Calu3 (cell line): ENCODE measurements at regions of chr4 and their contacts with region 1.

Region 1: GRCh38 chr4:89657931-89658700 is 178.8 kb downstream of the SNCA start:
- DNase-seq: no peak
- H3K4me3 Mint-ChIP-seq: no peak overlapping the region
- H3K27ac Mint-ChIP-seq: no peak overlapping the region
- H3K4me1 Mint-ChIP-seq: peaks cover 8% of the 10 kb centered on the region
- H3K27me3 Mint-ChIP-seq: no peaks in the 10 kb centered on the region
- CTCF ChIP-seq: no peak

Region 2: DNA sequence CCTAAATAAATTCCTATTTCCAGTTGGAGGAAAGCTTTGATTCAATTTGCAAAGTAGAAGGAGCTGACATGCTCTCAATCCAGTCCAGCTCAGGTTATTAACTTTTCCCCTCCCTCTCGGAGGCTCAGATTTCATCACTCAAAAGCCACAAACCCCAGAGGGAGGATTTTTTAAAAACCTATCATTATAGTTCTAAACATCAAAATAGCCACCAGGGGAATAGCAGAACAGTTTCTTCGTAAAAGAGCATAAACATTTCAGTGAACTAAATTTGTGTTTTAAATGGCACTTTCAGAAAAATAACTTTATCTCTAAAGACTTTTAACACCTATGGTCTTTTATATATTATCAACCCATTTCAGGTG is 359.3 kb before region 1 on chr4:
- CTCF ChIA-PET with region 1: no interaction called
- intact Hi-C with region 1: no loop called
- DNase-seq: no peak
- H3K4me3 Mint-ChIP-seq: peak overlapping the region; percentile 82
- H3K27ac Mint-ChIP-seq: peak overlapping the region; percentile 92
- H3K4me1 Mint-ChIP-seq: peaks cover 28% of the 10 kb centered on the region
- H3K27me3 Mint-ChIP-seq: no peaks in the 10 kb centered on the region
- CTCF ChIP-seq: no peak

Region 3: GRCh38 chr4:89572224-89572858 is 85.8 kb before region 1 on chr4:
- CTCF ChIA-PET with region 1: no interaction called
- intact Hi-C with region 1: no loop called
- DNase-seq: no peak
- H3K4me3 Mint-ChIP-seq: no peak overlapping the region
- H3K27ac Mint-ChIP-seq: no peak overlapping the region
- H3K4me1 Mint-ChIP-seq: no peaks in the 10 kb centered on the region
- H3K27me3 Mint-ChIP-seq: no peaks in the 10 kb centered on the region
- CTCF ChIP-seq: no peak

Region 4: GRCh38 chr4:89868999-89869589 is 211.0 kb after region 1 on chr4:
- CTCF ChIA-PET with region 1: interaction called, 3 read pairs
- intact Hi-C with region 1: loop called (anchors 1 kb)
- DNase-seq: no peak
- H3K4me3 Mint-ChIP-seq: no peak overlapping the region
- H3K27ac Mint-ChIP-seq: no peak overlapping the region
- H3K4me1 Mint-ChIP-seq: no peaks in the 10 kb centered on the region
- H3K27me3 Mint-ChIP-seq: no peaks in the 10 kb centered on the region
- CTCF ChIP-seq: no peak

Region 5: DNA sequence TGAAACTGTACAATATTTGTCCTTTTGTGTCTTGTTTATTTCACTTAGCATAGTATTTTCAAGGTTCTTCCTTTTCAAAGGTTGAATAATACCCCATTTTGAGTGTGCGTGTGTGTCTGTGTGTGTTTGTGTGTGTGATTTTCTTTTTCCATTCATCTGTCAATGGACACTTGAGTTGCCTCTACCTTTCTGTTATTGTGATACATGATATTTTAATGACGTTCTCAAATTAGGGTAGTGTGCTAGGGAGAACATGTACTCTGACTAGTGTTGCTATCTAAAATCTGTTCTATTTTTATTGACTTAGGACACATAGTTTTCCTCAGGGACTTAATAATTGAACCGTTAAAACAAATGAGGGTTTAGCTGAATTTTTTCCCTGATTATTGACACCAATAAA is 246.4 kb after region 1 on chr4:
- CTCF ChIA-PET with region 1: no interaction called
- intact Hi-C with region 1: loop called (anchors 5 kb)
- DNase-seq: no peak
- H3K4me3 Mint-ChIP-seq: no peak overlapping the region
- H3K27ac Mint-ChIP-seq: no peak overlapping the region
- H3K4me1 Mint-ChIP-seq: no peaks in the 10 kb centered on the region
- H3K27me3 Mint-ChIP-seq: no peaks in the 10 kb centered on the region
- CTCF ChIP-seq: no peak

Region 6: DNA sequence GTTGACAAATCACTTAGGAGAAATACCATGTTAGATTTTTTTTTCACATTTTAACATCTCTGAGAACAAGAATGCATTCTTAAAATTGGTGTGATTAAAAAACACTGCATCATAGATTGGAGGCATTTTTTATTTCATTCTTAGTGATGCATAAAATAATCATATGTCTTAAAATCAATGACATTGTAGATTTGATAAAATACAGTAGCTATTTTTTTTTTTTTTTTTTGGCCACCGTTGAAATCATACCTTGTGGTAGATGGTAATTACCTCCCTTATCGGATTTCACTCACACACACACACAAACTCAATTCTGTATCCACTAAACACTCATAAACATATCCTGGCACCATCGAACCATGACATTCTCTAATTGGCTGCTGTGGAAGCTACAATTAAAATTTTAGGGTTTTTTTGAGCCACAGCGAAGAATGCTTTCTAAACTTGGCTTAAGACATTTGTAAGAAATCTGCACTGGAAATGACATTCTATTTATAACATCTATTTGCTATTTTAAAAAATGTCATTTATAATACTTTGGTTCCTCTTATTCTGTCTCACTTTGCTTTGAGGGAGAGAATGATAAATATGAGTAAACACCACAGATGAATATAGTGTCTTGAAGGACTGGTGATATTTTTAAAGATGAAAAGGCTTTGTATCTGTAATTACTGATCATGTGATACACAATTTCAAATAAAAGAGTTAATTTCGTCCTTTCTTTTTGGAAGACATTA is 529.2 kb after region 1 on chr4:
- CTCF ChIA-PET with region 1: no interaction called
- intact Hi-C with region 1: no loop called
- DNase-seq: no peak
- H3K4me3 Mint-ChIP-seq: no peak overlapping the region
- H3K27ac Mint-ChIP-seq: no peak overlapping the region
- H3K4me1 Mint-ChIP-seq: peaks cover 26% of the 10 kb centered on the region
- H3K27me3 Mint-ChIP-seq: no peaks in the 10 kb centered on the region
- CTCF ChIP-seq: no peak